ENCODE measurements at regions of chr11 and their contacts with region 1.

Region 1: GRCh38 chr11:67583247-67584204 is at the start of gene GSTP1:
- DNase-seq: peak; percentile 86
- ATAC-seq: peak; percentile 92
- H3K4me3 Mint-ChIP-seq: peak within 1 kb of the TSS; percentile 88
- H3K27ac Mint-ChIP-seq: peak within 1 kb of the TSS; percentile 82
- H3K4me1 Mint-ChIP-seq: peaks cover 51% of the 10 kb centered on the region
- H3K27me3 Mint-ChIP-seq: peaks cover 24% of the 10 kb centered on the region
- total RNA-seq, gene GSTP1: 330 to 337 TPM

Region 2: DNA sequence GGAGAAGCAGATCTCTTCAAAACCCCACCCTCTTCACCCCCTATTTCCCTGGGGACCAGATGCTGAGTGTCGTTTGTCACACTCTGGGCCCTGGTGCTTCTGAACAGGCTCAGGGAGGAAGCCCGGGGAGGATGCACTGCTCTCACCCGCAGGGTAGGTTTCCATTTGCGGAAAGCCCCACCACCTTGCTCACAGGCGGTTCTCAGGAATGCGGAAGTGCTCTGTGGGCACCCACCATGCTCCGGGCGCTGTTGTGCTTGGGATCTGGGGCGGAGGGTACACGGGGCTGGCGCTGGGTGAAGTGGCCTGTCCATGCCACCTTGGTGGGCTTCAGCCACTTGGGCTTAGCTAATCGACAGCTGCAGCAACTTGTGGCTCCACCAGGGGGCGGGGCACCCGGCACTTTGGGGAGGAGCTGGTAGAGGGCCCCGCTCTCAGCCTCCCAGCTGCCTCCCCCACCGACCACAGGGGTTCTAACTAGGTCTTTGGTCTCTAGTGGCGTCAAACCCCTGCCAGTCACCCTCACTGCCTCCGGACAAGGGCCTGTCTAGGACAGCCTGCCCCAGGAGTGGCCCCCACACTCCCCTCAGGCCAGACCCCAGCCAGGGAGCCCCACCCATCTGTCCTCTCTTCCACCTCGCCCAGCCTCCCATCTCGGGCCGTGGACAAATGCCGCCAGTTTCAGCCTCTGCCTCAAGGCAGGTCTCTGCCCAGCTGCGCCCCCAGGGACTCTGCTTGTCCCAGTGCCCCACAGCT is 30.6 kb after region 1 on chr11:
- CTCF ChIA-PET with region 1: interaction called, 11 read pairs
- POLR2A ChIA-PET with region 1: interaction called, 13 read pairs
- DNase-seq: peak; percentile 90
- ATAC-seq: peak; percentile 90
- H3K4me3 Mint-ChIP-seq: peak overlapping the region; percentile 78
- H3K27ac Mint-ChIP-seq: peak overlapping the region; percentile 98
- H3K4me1 Mint-ChIP-seq: peaks cover 50% of the 10 kb centered on the region
- H3K27me3 Mint-ChIP-seq: no peaks in the 10 kb centered on the region

Measured in activated CD8-positive, alpha-beta T cell treated with anti-CD3 and anti-CD28 coated beads, Interleukin-2, amount 10 ng/mL, durations not matched to agents 7 days and 5 days (primary cell).